Posterior cingulate gyrus (tissue), 11 donors: ENCODE measurements at regions of chr14 and their contacts with region 1.

Region 1: GRCh38 chr14:69726761-69727511 is 40.0 kb upstream of the SRSF5 start:
- DNase-seq: peak; percentile 67 to 97 (median 86)

Region 2: GRCh38 chr14:69580009-69580577 is 146.8 kb before region 1 on chr14:
- intact Hi-C with region 1: loop called (anchors 1 kb)
- DNase-seq: peak in 2 of 10 donors; percentile 16 to 77